ENCODE measurements at regions of chr17 and their contacts with region 1.

Region 1: GRCh38 chr17:4412933-4413831 is 20.6 kb upstream of the SPNS3 start:
- DNase-seq: peak; percentile 69 to 92 (median 83)
- ATAC-seq: peak; percentile 98
- H3K4me3 ChIP-seq: no peak overlapping the region
- H3K4me3 Mint-ChIP-seq: peak overlapping the region in 9 of 10 donors; percentile 39 to 73 (median 51)
- H3K27ac ChIP-seq: no peak overlapping the region
- H3K27ac Mint-ChIP-seq: peak overlapping the region in 3 of 9 donors; percentile 36 to 78 (median 49)
- H3K4me1 ChIP-seq: peaks cover 4 to 5% of the 10 kb centered on the region in 2 donors
- H3K4me1 Mint-ChIP-seq: peaks cover 0 to 9% (median 5%) of the 10 kb centered on the region in 7 donors
- H3K27me3 ChIP-seq: no peaks in the 10 kb centered on the region
- H3K27me3 Mint-ChIP-seq: peaks cover 0 to 1% (median 0%) of the 10 kb centered on the region in 5 donors

Region 2: DNA sequence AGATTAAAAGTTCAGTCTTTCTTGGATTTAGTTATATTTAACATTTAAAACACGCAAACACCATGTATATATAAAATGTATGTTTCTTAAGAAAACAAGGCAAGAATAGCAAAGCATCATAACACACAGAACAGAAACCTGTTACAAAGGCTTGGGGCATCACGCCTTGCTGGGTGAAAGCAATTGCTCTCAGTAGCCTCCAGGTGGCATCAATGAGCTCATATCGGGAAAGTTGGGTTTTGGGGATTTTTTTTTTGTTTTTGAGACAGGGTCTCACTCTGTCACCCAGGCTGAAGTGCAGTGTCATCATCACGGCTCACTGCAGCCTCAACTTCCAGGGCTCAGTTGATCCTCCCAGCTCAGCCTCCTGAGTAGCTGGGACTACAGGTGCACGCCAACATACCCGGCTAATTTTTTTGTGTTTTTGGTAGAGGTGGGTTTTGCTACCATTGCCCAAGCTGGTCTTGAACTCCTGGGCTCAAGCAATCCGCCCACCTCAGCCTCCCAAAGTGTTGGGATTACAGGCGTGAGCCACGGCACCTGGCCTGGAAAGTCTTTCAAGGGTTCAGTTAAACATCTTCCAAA is 213.3 kb before region 1 on chr17:
- CTCF ChIA-PET with region 1: interaction called, 7 read pairs
- POLR2A ChIA-PET with region 1: no interaction called
- intact Hi-C with region 1: loop called (anchors 1 kb)
- DNase-seq: peak in 5 of 9 donors; percentile 36 to 49 (median 41)
- ATAC-seq: peak; percentile 75
- H3K4me3 ChIP-seq: no peak overlapping the region
- H3K4me3 Mint-ChIP-seq: no peak overlapping the region
- H3K27ac ChIP-seq: no peak overlapping the region
- H3K27ac Mint-ChIP-seq: peak overlapping the region in 1 of 9 donors; percentile 28
- H3K4me1 ChIP-seq: no peaks in the 10 kb centered on the region
- H3K4me1 Mint-ChIP-seq: peaks cover 0 to 10% (median 0%) of the 10 kb centered on the region in 7 donors
- H3K27me3 ChIP-seq: no peaks in the 10 kb centered on the region
- H3K27me3 Mint-ChIP-seq: no peaks in the 10 kb centered on the region

Region 3: GRCh38 chr17:4215882-4216570 is 197.2 kb before region 1 on chr17:
- CTCF ChIA-PET with region 1: interaction called, 155 read pairs
- POLR2A ChIA-PET with region 1: interaction called, 4 read pairs
- intact Hi-C with region 1: loop called (anchors 1 kb)
- DNase-seq: no peak
- ATAC-seq: no peak
- H3K4me3 ChIP-seq: no peak overlapping the region
- H3K4me3 Mint-ChIP-seq: no peak overlapping the region
- H3K27ac ChIP-seq: no peak overlapping the region
- H3K27ac Mint-ChIP-seq: peak overlapping the region in 5 of 9 donors; percentile 3 to 82 (median 75)
- H3K4me1 ChIP-seq: no peaks in the 10 kb centered on the region
- H3K4me1 Mint-ChIP-seq: peaks cover 7 to 13% (median 11%) of the 10 kb centered on the region in 7 donors
- H3K27me3 ChIP-seq: no peaks in the 10 kb centered on the region
- H3K27me3 Mint-ChIP-seq: no peaks in the 10 kb centered on the region

Region 4: GRCh38 chr17:4263282-4264215 is 149.6 kb before region 1 on chr17 and contains the start of gene ANKFY1:
- CTCF ChIA-PET with region 1: no interaction called
- POLR2A ChIA-PET with region 1: no interaction called
- intact Hi-C with region 1: loop called in 1 of 2 experiments (anchors 1 kb)
- DNase-seq: peak; percentile 95 to 99 (median 97)
- ATAC-seq: peak; percentile 98
- H3K4me3 ChIP-seq: peak within 1 kb of the TSS; percentile 73
- H3K4me3 Mint-ChIP-seq: peak within 1 kb of the TSS; percentile 89 to 99 (median 94)
- H3K27ac ChIP-seq: peak within 1 kb of the TSS; percentile 94
- H3K27ac Mint-ChIP-seq: peak within 1 kb of the TSS; percentile 82 to 98 (median 95)
- H3K4me1 ChIP-seq: peaks cover 16 to 17% of the 10 kb centered on the region in 2 donors
- H3K4me1 Mint-ChIP-seq: peaks cover 27 to 49% (median 41%) of the 10 kb centered on the region in 7 donors
- H3K27me3 ChIP-seq: no peaks in the 10 kb centered on the region
- H3K27me3 Mint-ChIP-seq: no peaks in the 10 kb centered on the region
- total RNA-seq, gene ANKFY1: 52.4 to 84.5 (median 69.7) TPM

Region 5: GRCh38 chr17:4304417-4305027 is 108.7 kb before region 1 on chr17:
- CTCF ChIA-PET with region 1: interaction called, 3 read pairs
- POLR2A ChIA-PET with region 1: no interaction called
- intact Hi-C with region 1: loop called (anchors 1 to 2 kb)
- DNase-seq: peak in 8 of 9 donors; percentile 20 to 66 (median 52)
- ATAC-seq: peak; percentile 90
- H3K4me3 ChIP-seq: no peak overlapping the region
- H3K4me3 Mint-ChIP-seq: no peak overlapping the region
- H3K27ac ChIP-seq: no peak overlapping the region
- H3K27ac Mint-ChIP-seq: no peak overlapping the region
- H3K4me1 ChIP-seq: peaks cover 6 to 9% of the 10 kb centered on the region in 2 donors
- H3K4me1 Mint-ChIP-seq: peaks cover 14 to 33% (median 23%) of the 10 kb centered on the region in 7 donors
- H3K27me3 ChIP-seq: no peaks in the 10 kb centered on the region
- H3K27me3 Mint-ChIP-seq: no peaks in the 10 kb centered on the region

Measured in naive thymus-derived CD4-positive, alpha-beta T cell (primary cell).